K562 (cell line): ENCODE measurements at regions of chr17 and their contacts with region 1.

Region 1: GRCh38 chr17:42997984-42998938 is at the start of gene RPL27:
- DNase-seq: peak; percentile 90 to 99 (median 92)
- ATAC-seq: peak; percentile 96
- H3K4me3 ChIP-seq: peak within 1 kb of the TSS; percentile 93
- H3K27ac ChIP-seq: peak within 1 kb of the TSS; percentile 94
- H3K4me1 ChIP-seq: peaks cover 14 to 18% of the 10 kb centered on the region in 2 experiments; a peak in 4 of 5 replicates
- H3K27me3 ChIP-seq: no peaks in the 10 kb centered on the region
- CTCF ChIP-seq: peak; percentile 92 to 96 (median 95)
- EP300 ChIP-seq: peak; percentile 81
- POLR2A ChIP-seq: peak; percentile 99
- RAD21 ChIP-seq: peak; percentile 58 to 72
- polyA plus RNA-seq, gene RPL27: 3,710 to 4,120 TPM

Region 2: DNA sequence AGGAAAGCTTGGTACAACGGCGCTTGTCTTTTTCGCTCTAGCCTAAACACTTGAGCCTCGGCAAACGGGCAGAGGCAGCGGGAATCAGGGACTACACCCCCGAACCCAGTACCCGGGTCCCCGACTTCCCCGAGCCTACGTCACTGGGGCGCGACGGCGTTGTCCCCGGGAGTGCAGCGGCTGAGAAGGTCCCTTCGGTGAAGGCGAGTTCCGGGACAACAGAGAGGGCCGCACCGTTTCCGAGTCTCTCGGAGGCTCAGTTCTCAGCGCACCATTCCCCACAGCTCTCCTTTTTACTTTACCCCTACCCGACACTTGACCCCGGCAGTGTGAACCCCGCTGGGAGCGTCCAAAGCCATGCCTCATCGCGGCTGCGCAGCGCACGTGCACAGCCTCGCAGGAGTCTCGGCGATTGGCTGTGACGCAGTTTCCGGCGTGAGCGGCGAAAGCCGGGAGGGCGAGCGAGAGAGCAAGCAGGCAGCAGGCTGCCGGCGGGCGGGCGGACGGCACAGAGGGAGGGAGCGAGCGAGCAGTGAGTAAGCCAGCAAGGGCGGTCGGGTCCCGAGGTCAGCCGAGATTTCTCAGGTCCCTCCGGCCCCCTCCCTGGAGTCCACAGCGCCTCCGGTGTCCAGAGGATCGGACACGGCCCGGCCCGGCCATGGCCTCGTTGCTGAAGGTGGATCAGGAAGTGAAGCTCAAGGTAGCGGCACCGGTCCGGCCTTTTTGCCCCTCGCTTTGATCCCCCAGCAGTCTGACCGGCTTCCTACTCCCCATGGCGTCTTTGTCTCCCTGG is 165.1 kb before region 1 on chr17 and contains the start of gene PSME3:
- CTCF ChIA-PET with region 1: interaction called, 3 read pairs
- POLR2A ChIA-PET with region 1: interaction called, 10 read pairs
- in situ Hi-C with region 1: no loop called
- intact Hi-C with region 1: no loop called
- DNase-seq: peak; percentile 90 to 95 (median 92)
- ATAC-seq: peak; percentile 96
- H3K4me3 ChIP-seq: peak within 1 kb of the TSS; percentile 90
- H3K27ac ChIP-seq: peak within 1 kb of the TSS; percentile 95
- H3K4me1 ChIP-seq: peaks cover 3 to 14% of the 10 kb centered on the region in 2 experiments; a peak in 4 of 5 replicates
- H3K27me3 ChIP-seq: no peaks in the 10 kb centered on the region
- CTCF ChIP-seq: peak in 1 of 3 experiments; percentile 1; a peak in 1 of 6 replicates
- EP300 ChIP-seq: peak; percentile 16; the same call in 1 of the 2 replicates
- POLR2A ChIP-seq: peak; percentile 96
- RAD21 ChIP-seq: no peak; a peak in 1 of 4 replicates
- polyA plus RNA-seq, gene PSME3: 31.2 to 43.2 TPM

Region 3: GRCh38 chr17:42843358-42843934 is 154.8 kb before region 1 on chr17:
- CTCF ChIA-PET with region 1: interaction called, 8 read pairs
- POLR2A ChIA-PET with region 1: interaction called, 8 read pairs
- in situ Hi-C with region 1: no loop called
- intact Hi-C with region 1: loop called (anchors 2 kb)
- DNase-seq: peak; percentile 61 to 70 (median 64)
- ATAC-seq: peak; percentile 83
- H3K4me3 ChIP-seq: no peak overlapping the region
- H3K27ac ChIP-seq: no peak overlapping the region
- H3K4me1 ChIP-seq: peaks cover 0 to 6% of the 10 kb centered on the region in 2 experiments; a peak in 2 of 5 replicates
- H3K27me3 ChIP-seq: no peaks in the 10 kb centered on the region
- CTCF ChIP-seq: peak; percentile 79 to 96 (median 96)
- EP300 ChIP-seq: no peak
- POLR2A ChIP-seq: no peak
- RAD21 ChIP-seq: peak; percentile 87 to 91

Region 4: GRCh38 chr17:42937712-42938596 is 60.3 kb before region 1 on chr17:
- CTCF ChIA-PET with region 1: interaction called, 3 read pairs
- POLR2A ChIA-PET with region 1: no interaction called
- in situ Hi-C with region 1: no loop called
- intact Hi-C with region 1: loop called (anchors 5 kb)
- DNase-seq: peak; percentile 54 to 73 (median 60)
- ATAC-seq: peak; percentile 96
- H3K4me3 ChIP-seq: no peak overlapping the region
- H3K27ac ChIP-seq: no peak overlapping the region
- H3K4me1 ChIP-seq: no peaks in the 10 kb centered on the region
- H3K27me3 ChIP-seq: no peaks in the 10 kb centered on the region
- CTCF ChIP-seq: peak; percentile 79 to 91 (median 84)
- EP300 ChIP-seq: 0 out of 2 replicates have a peak, but pooled peaks have one; percentile 9
- POLR2A ChIP-seq: no peak
- RAD21 ChIP-seq: peak; percentile 78 to 91

Region 5: DNA sequence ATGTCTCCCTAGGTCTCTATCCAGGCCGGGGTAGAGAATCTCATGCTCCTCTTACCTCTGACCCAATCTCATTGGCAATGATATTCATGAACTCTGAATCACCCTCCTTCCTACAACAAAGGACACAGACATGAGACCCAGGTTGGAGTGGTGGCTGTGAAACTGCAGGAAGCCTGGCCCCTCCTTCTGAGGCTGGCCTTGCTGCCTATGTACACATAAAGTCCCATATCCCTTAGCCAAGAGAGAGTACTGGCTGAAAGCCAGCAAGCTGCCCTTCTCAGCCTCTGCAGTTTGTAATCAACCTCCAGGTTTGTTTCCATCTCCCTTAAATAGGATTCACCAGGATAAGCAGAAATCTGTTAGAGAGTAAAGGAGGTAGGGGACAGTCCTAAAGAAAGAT is 44.6 kb before region 1 on chr17:
- CTCF ChIA-PET with region 1: no interaction called
- POLR2A ChIA-PET with region 1: no interaction called
- in situ Hi-C with region 1: no loop called
- intact Hi-C with region 1: no loop called
- DNase-seq: no peak
- ATAC-seq: no peak
- H3K4me3 ChIP-seq: no peak overlapping the region
- H3K27ac ChIP-seq: no peak overlapping the region
- H3K4me1 ChIP-seq: no peaks in the 10 kb centered on the region
- H3K27me3 ChIP-seq: no peaks in the 10 kb centered on the region
- CTCF ChIP-seq: no peak
- EP300 ChIP-seq: no peak
- POLR2A ChIP-seq: no peak
- RAD21 ChIP-seq: no peak

Region 6: DNA sequence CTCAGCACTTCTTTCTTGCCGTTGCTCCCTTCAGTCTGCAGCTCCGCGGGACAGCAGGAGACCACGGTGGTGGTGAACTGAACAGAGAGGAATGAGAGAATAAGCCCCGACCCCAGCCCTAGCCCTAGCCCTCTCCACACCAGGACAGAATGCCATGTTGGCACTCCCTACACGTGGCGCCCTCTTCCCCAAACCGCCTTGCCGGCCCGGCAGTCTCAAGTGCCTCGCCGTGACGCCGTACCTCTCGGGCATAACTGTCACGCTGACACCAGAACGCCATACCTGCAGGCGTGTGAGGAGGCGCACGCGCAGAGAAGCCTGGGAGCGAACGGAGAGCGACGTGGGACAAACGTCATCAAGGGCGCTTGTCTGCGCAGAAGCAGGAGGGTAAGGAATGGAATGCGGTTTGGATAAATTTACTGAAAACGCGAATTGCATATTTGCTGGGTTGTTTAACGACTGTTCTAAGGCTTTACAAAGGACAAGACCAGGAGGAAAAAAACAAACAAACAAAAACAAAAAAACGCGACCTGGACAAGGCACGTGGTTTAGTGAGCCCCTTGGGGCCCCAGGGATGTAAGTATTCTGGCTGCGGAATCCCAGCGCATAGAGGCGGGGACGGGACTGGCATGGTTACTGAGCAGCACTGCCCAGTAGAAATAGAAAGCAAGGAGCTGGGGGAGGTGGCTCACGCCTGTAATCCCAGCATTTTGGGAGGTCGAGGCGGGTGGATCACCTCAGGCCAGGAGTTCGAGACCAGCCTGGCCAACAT is 33.9 kb before region 1 on chr17 and contains the start of gene AARSD1:
- CTCF ChIA-PET with region 1: no interaction called
- POLR2A ChIA-PET with region 1: interaction called, 17 read pairs
- in situ Hi-C with region 1: no loop called
- intact Hi-C with region 1: loop called (anchors 1 kb)
- DNase-seq: peak; percentile 79 to 97 (median 86)
- ATAC-seq: peak; percentile 94
- H3K4me3 ChIP-seq: peak within 1 kb of the TSS; percentile 67
- H3K27ac ChIP-seq: peak within 1 kb of the TSS; percentile 86
- H3K4me1 ChIP-seq: peaks cover 3 to 10% of the 10 kb centered on the region in 2 experiments; a peak in 4 of 5 replicates
- H3K27me3 ChIP-seq: no peaks in the 10 kb centered on the region
- CTCF ChIP-seq: no peak
- EP300 ChIP-seq: no peak
- POLR2A ChIP-seq: peak; percentile 97
- RAD21 ChIP-seq: no peak
- polyA plus RNA-seq, gene AARSD1: 51.7 to 91.5 TPM

Region 7: DNA sequence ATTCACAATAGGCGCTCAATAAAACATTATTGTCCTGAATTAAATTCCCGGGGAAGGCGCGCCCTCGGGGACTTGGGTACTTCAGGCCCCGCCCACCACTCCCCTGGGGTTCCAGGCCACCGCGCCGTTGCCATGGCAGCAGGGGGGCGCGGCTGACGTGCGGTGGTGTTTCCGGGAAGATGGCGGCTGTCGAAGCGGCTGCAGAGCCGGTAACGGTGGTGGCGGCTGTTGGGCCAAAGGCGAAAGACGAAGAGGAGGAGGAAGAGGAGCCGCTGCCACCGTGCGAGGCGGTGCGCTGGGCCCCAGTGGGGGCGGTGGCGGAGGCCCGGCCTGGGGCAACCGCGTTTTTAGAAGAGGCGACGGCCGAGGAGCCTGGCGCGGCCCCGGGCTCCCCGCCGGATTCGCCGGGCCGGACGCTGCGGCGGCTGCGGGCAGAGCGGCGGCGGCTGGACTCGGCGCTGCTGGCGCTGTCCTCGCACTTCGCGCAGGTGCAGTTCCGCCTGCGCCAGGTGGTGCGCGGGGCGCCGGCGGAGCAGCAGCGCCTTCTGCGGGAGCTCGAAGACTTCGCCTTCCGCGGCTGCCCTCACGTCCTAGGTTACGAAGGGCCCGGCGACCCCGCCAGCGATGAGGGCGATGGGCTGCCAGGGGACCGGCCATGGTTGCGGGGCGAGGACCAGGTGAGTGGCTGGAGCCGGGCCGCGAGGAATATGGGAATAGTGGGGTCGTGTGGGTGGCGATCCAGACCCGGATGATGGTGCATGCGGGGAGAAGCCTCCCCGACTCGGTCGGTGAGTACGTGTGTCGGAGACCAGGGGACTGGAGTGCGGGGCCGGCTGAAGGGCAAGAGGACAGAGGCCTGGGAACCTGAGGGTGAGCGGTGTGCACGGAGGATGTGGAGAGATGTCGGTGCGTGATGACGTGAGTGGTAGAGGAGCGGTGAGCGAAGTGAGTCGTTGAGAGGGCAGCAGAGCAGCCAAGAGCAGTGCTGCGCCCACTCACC is 17.6 kb before region 1 on chr17 and contains the start of gene RUNDC1:
- CTCF ChIA-PET with region 1: no interaction called
- POLR2A ChIA-PET with region 1: interaction called, 16 read pairs
- in situ Hi-C with region 1: no loop called
- intact Hi-C with region 1: no loop called
- DNase-seq: peak; percentile 92 to 96 (median 94)
- ATAC-seq: peak; percentile 88
- H3K4me3 ChIP-seq: peak within 1 kb of the TSS; percentile 92
- H3K27ac ChIP-seq: peak within 1 kb of the TSS; percentile 92
- H3K4me1 ChIP-seq: peaks cover 21 to 28% of the 10 kb centered on the region in 2 experiments; a peak in 4 of 5 replicates
- H3K27me3 ChIP-seq: no peaks in the 10 kb centered on the region
- CTCF ChIP-seq: peak; percentile 27 to 78 (median 51); a peak in 4 of 6 replicates
- EP300 ChIP-seq: no peak
- POLR2A ChIP-seq: peak; percentile 57; the same call in 1 of the 2 replicates
- RAD21 ChIP-seq: peak in 1 of 2 experiments; percentile 61; a peak in 2 of 4 replicates
- polyA plus RNA-seq, gene RUNDC1: 3.4 to 3.6 TPM

Region 8: GRCh38 chr17:43024407-43025289 is 26.4 kb after region 1 on chr17 and contains the start of gene RND2:
- CTCF ChIA-PET with region 1: no interaction called
- POLR2A ChIA-PET with region 1: interaction called, 19 read pairs
- in situ Hi-C with region 1: no loop called
- intact Hi-C with region 1: no loop called
- DNase-seq: peak; percentile 97 to 98 (median 97)
- ATAC-seq: peak; percentile 75
- H3K4me3 ChIP-seq: peak within 1 kb of the TSS; percentile 58
- H3K27ac ChIP-seq: peak within 1 kb of the TSS; percentile 92
- H3K4me1 ChIP-seq: peaks cover 13 to 66% of the 10 kb centered on the region in 2 experiments
- H3K27me3 ChIP-seq: no peaks in the 10 kb centered on the region
- CTCF ChIP-seq: peak; percentile 89 to 95 (median 90)
- EP300 ChIP-seq: peak; percentile 62
- POLR2A ChIP-seq: peak; percentile 84
- RAD21 ChIP-seq: peak; percentile 75 to 87
- polyA plus RNA-seq, gene RND2: 0.15 to 0.39 TPM